Right cardiac atrium (tissue), 5 donors: ENCODE measurements at regions of chr22 and their contacts with region 1.

Region 1: DNA sequence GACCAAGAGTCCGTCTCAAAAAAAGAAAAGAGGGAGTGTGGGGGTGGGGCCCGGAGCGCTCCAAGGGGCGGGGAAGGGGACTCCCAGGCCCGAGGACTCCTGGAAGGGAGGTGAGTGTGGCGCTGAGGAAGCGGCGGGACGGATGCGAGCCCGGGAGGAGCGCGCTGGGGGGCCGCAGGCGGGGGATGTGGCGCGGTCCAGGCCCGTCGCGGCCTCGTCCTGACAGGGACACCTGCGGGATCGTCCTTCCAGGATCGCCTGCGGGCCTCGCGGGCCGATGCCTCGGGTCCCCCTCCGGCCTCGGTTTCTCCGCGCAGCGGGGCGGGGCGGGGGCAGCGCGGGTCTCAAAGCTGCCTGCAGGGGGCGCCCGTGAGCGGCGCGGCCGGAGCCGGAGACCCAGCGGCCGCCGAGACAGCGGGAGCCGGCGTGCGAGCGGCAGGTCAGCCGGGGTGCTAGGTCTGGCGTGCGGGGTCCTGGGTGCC is 3.8 kb upstream of the ADORA2A start:
- DNase-seq: peak; percentile 64 to 90 (median 84)
- ATAC-seq: peak; percentile 62 to 65
- H3K4me3 ChIP-seq: peak overlapping the region; percentile 79
- H3K27ac ChIP-seq: no peak overlapping the region
- H3K4me1 ChIP-seq: peaks cover 6% of the 10 kb centered on the region
- H3K27me3 ChIP-seq: no peaks in the 10 kb centered on the region

Region 2: DNA sequence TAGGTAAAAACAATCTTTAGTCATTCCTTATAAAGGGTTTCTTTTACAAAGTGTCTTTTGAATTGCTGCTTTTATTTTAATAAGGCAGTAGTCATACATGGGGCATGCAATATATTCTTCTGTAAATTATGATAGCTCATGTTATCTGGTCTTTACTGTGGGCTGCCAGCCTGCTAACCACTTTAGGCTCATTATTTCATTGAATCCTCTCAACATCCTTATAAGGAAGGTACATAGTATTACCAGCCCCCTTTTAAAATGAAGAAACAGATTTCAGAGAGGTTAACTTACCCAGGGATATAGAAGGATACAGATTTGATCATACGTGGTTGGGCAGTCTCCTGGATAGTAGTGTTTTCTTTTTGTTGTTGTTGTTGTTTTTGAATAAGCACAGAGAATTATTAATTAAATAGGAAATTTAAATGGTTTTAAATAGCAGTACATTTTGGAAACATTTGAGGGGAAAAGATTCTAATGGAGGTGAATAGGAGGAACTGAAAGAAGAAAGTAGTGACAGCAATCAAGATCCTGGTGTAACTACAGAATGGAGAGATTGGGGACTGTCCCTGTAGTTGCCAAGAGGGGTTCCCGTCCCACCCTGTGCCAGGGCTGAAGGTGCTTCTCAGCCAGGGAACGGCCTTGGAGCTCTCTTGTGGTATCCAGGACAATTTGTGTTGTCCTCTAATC is 131.9 kb before region 1 on chr22:
- intact Hi-C with region 1: no loop called
- DNase-seq: no peak
- ATAC-seq: peak in 1 of 2 donors; percentile 4
- H3K4me3 ChIP-seq: no peak overlapping the region
- H3K27ac ChIP-seq: peak overlapping the region; percentile 83
- H3K4me1 ChIP-seq: peaks cover 9% of the 10 kb centered on the region
- H3K27me3 ChIP-seq: no peaks in the 10 kb centered on the region

Region 3: GRCh38 chr22:24474221-24474620 is 50.7 kb after region 1 on chr22:
- intact Hi-C with region 1: loop called in 1 of 4 experiments (anchors 10 kb)
- DNase-seq: no peak
- ATAC-seq: peak in 1 of 2 donors; percentile 48
- H3K4me3 ChIP-seq: no peak overlapping the region
- H3K27ac ChIP-seq: no peak overlapping the region
- H3K4me1 ChIP-seq: peaks cover 8% of the 10 kb centered on the region
- H3K27me3 ChIP-seq: no peaks in the 10 kb centered on the region

Region 4: GRCh38 chr22:24503137-24503842 is 79.7 kb after region 1 on chr22:
- intact Hi-C with region 1: loop called in 2 of 4 experiments (anchors 5 kb)
- DNase-seq: peak; percentile 56 to 88 (median 76)
- ATAC-seq: peak; percentile 29 to 72
- H3K4me3 ChIP-seq: no peak overlapping the region
- H3K27ac ChIP-seq: no peak overlapping the region
- H3K4me1 ChIP-seq: no peaks in the 10 kb centered on the region
- H3K27me3 ChIP-seq: no peaks in the 10 kb centered on the region

Region 5: GRCh38 chr22:24516301-24516737 is 92.8 kb after region 1 on chr22:
- intact Hi-C with region 1: loop called in 3 of 4 experiments (anchors 5 to 10 kb)
- DNase-seq: no peak
- ATAC-seq: no peak
- H3K4me3 ChIP-seq: no peak overlapping the region
- H3K27ac ChIP-seq: no peak overlapping the region
- H3K4me1 ChIP-seq: peaks cover 2% of the 10 kb centered on the region
- H3K27me3 ChIP-seq: no peaks in the 10 kb centered on the region